Tibial artery (tissue), 4 donors: ENCODE measurements at regions of chr18 and their contacts with region 1.

Region 1: GRCh38 chr18:12726774-12727550 is 24.1 kb downstream of the PSMG2 start:
- DNase-seq: peak in 1 of 2 donors; percentile 46
- H3K4me3 ChIP-seq: no peak overlapping the region
- H3K27ac ChIP-seq: no peak overlapping the region
- H3K4me1 ChIP-seq: no peaks in the 10 kb centered on the region
- H3K27me3 ChIP-seq: no peaks in the 10 kb centered on the region
- CTCF ChIP-seq: peak; percentile 87 to 92

Region 2: DNA sequence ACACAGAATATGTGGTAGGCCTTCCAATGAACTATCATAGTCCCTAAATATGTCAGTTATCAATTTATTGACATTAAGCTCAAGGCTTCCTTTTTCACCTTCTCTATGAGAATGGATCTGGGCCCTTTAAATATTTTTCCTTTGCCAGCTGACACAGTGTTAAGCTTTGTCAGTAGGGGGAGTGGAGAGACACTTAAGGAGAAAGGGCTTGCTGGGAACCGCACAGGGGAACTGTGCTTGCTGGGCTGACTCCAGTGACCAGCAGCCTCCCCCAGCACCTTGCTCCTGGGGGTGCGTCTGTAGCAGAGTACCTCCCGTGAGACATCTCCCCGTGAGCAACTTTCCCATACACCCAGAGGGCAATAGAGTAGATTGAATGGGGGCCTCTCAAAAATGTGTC is 163.5 kb after region 1 on chr18:
- intact Hi-C with region 1: loop called (anchors 5 kb)
- DNase-seq: no peak
- H3K4me3 ChIP-seq: no peak overlapping the region
- H3K27ac ChIP-seq: no peak overlapping the region
- H3K4me1 ChIP-seq: no peaks in the 10 kb centered on the region
- H3K27me3 ChIP-seq: peaks cover 0 to 6% of the 10 kb centered on the region in 2 donors
- CTCF ChIP-seq: no peak